ENCODE measurements at regions of chr11 and their contacts with region 1.

Region 1: GRCh38 chr11:115452244-115452643 is 52.0 kb downstream of the CADM1 start:
- DNase-seq: no peak
- H3K4me3 ChIP-seq: no peak overlapping the region
- H3K4me3 Mint-ChIP-seq: no peak overlapping the region
- H3K27ac Mint-ChIP-seq: no peak overlapping the region
- H3K4me1 ChIP-seq: peaks cover 20% of the 10 kb centered on the region
- H3K4me1 Mint-ChIP-seq: peaks cover 20% of the 10 kb centered on the region
- H3K27me3 ChIP-seq: no peaks in the 10 kb centered on the region
- H3K27me3 Mint-ChIP-seq: no peaks in the 10 kb centered on the region
- CTCF ChIP-seq: no peak

Region 2: DNA sequence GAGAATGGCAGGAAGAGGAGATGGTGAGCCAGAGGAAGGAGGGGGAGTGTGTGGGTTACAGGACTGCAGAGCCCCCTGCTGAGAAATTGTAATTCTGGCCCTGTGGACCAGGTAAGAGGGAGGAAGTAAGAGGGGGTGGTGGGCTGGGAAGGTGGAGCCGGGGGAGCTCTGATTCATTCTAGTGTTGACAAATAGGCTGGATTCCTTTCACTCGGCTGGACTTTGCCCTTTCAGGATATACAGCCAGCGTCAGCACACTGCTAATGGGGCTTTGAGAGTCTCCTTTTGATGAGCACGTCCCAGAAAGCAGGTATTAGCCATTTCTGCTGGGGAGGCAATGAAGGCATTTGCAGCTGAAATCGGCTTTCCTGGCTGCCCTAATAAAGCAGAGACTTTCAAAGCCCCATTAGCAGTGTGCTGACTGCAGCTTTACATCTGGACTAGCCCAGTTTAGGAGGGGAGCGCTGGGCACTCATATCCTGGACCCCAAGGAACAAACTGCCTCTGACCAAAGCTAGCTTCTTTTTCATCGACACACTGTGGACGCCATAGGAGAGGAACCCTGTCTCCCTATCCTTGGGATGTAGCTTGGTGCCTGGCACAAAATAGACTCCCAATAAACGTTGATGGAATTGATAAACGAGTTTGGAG is 96.8 kb after region 1 on chr11:
- CTCF ChIA-PET with region 1: interaction called, 8 read pairs
- POLR2A ChIA-PET with region 1: no interaction called
- intact Hi-C with region 1: loop called (anchors 2 kb)
- DNase-seq: peak; percentile 91 to 96
- H3K4me3 ChIP-seq: no peak overlapping the region
- H3K4me3 Mint-ChIP-seq: peak overlapping the region; percentile 36
- H3K27ac Mint-ChIP-seq: peak overlapping the region; percentile 77
- H3K4me1 ChIP-seq: peaks cover 27% of the 10 kb centered on the region
- H3K4me1 Mint-ChIP-seq: peaks cover 30% of the 10 kb centered on the region
- H3K27me3 ChIP-seq: no peaks in the 10 kb centered on the region
- H3K27me3 Mint-ChIP-seq: no peaks in the 10 kb centered on the region
- CTCF ChIP-seq: peak; percentile 32 to 65

Measured in Caco-2 (cell line).